ENCODE measurements at regions of chr14 and their contacts with region 1.

Region 1: DNA sequence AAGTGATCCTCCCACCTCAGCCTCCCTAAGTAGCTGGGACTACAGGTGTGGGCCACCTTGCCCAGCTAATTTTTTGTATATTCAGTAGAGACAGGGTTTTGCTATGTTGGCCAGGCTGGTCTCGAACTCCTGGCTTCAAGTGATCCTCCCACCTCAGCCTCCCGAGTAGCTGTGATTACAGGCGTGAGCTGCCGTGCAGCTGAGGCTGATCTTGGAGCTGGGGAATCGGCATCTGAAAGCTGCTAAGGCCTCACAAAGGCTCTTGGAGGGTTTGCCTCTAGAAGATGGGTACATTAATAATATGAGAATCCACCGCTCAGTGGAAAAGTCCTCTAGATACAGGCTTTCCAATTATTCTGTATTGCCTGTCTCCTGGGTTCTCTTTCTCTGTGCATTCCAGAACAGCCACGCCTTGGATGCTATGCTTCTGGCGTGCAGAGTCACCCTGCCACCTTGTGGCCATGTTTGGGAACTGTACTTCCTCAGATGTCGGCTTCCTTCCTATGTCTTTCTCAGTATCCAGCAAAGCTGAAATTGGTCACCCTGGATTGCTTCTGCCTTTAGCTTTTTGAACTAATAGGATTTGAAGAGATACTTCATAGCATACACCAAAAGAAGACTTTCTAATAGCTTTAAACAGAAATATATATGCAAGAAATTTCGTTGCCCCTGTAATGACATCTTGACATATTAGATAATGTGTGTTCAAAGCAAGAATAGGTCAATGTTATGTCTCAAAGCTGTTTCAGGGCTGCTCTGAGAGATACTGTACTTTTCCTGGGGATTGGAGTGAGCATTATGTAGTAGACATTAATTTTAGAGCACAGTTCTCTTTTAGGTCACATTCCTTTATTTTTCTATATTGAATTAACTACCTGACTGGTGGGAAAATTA is 75.4 kb downstream of the SNAPC1 start:
- DNase-seq: no peak
- H3K4me3 ChIP-seq: no peak overlapping the region
- H3K27me3 ChIP-seq: no peaks in the 10 kb centered on the region
- CTCF ChIP-seq: peak; percentile 92

Region 2: DNA sequence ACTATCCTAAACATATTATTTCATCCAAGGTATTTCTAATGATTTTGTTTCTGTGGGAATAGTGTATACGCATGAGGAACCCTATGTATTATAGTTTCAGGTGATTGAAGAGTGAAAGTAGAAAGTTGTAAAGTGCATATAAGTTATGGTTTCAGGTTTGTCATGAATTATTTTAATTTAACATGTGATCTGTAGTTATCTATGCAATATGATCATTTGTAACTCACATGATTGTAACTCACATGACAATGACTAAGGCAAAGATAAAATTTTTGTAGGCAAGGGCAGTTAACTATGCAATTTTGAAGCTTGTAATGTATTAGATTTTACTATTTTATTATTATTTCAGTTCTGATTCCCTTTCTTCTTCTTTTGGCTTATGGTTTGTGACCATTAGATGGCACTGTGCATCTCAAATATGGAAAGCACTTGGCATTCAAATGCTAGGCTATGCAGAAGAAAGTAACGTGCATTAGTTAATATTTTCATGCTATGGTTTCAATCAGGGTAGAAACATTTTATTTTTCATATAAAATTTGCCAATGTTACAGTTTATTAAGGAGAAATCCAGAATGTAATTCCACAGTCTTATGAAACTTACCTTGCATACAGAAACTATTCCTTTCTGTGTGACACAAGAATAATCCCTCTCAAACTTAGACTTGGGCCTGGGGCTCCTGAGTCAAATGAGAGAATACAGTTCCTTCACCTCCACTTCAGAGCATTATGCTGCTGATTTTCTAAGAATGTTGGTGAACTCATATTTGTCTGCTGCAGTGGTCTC is 540.7 kb before region 1 on chr14:
- CTCF ChIA-PET with region 1: interaction called, 21 read pairs
- POLR2A ChIA-PET with region 1: no interaction called
- DNase-seq: no peak
- H3K4me3 ChIP-seq: no peak overlapping the region
- H3K27me3 ChIP-seq: peaks cover 1% of the 10 kb centered on the region; the same call in 1 of the 2 replicates
- CTCF ChIP-seq: peak; percentile 73

Region 3: GRCh38 chr14:61456720-61457119 is 380.9 kb before region 1 on chr14:
- CTCF ChIA-PET with region 1: interaction called, 78 read pairs
- POLR2A ChIA-PET with region 1: no interaction called
- DNase-seq: no peak
- H3K4me3 ChIP-seq: no peak overlapping the region
- H3K27me3 ChIP-seq: peaks cover 2% of the 10 kb centered on the region
- CTCF ChIP-seq: peak; percentile 89

Region 4: DNA sequence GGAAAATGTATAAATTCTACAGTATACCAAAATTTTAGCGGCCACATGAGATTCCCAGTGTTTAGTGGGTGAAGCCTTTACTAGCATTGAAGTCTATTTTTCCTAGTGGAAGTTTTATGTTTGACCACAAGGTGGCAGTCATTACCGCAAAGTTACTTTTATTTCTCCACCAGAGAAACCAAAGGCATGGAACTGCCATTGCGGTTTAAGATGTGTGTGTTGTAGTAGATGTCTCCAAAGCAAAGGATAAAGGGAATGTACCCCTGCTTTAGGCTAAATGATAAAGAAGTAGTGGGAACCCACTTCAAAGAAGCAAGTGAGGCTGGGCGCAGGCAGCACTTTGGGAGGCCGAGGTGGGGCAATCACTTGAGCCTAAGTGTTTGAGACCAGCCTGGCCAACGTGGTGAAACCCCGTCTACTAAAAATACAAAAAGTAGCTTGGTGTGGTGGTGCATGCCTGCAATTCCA is 375.7 kb before region 1 on chr14:
- CTCF ChIA-PET with region 1: interaction called, 78 read pairs
- POLR2A ChIA-PET with region 1: no interaction called
- DNase-seq: no peak
- H3K4me3 ChIP-seq: no peak overlapping the region
- H3K27me3 ChIP-seq: no peaks in the 10 kb centered on the region
- CTCF ChIP-seq: peak; percentile 48

Region 5: DNA sequence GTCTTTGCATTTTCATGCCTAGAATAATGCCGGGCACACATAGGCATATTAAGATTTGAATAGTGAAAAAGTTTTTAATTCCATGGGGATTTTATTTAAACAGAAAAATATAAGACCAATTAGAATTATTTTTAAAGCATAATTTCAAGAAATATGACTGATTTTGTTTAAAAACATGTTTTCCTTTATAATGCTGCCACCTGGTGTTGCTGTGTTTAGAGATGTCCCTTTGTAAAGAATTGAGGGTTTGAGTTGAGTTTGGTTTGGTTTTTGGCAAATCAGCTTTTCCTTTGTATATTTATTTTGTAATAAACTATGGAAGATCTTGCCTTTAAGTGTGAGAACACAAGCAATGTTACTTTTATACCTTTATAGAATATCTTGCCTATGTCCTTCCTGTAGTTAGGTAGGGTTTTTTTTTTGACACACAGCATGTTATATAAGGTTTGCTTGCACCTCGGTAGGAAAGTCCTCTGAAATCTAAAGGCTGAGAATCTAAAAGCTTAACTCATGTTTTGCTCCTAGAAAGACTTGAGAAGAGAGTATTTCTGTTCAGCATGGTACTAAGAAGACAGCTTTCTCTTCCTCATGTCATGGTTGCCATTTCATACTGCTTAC is 106.7 kb before region 1 on chr14:
- CTCF ChIA-PET with region 1: interaction called, 11 read pairs
- POLR2A ChIA-PET with region 1: no interaction called
- DNase-seq: no peak
- H3K4me3 ChIP-seq: no peak overlapping the region
- H3K27me3 ChIP-seq: no peaks in the 10 kb centered on the region
- CTCF ChIP-seq: peak; percentile 39

Region 6: GRCh38 chr14:62126879-62127478 is 289.4 kb after region 1 on chr14:
- CTCF ChIA-PET with region 1: interaction called, 14 read pairs
- POLR2A ChIA-PET with region 1: no interaction called
- DNase-seq: no peak
- H3K4me3 ChIP-seq: no peak overlapping the region
- H3K27me3 ChIP-seq: no peaks in the 10 kb centered on the region
- CTCF ChIP-seq: peak; percentile 75

Measured in BJ (cell line).